CD8-positive, alpha-beta T cell (primary cell): ENCODE measurements at regions of chr6 and their contacts with region 1.

Region 1: GRCh38 chr6:89386917-89387491 is 25.1 kb downstream of the RRAGD start:
- DNase-seq: no peak
- ATAC-seq: no peak
- H3K4me3 ChIP-seq: no peak overlapping the region
- H3K4me3 Mint-ChIP-seq: no peak overlapping the region
- H3K27ac ChIP-seq: no peak overlapping the region
- H3K27ac Mint-ChIP-seq: no peak overlapping the region
- H3K4me1 ChIP-seq: no peaks in the 10 kb centered on the region
- H3K4me1 Mint-ChIP-seq: no peaks in the 10 kb centered on the region
- H3K27me3 ChIP-seq: peaks cover 0 to 3% of the 10 kb centered on the region in 2 experiments
- H3K27me3 Mint-ChIP-seq: no peaks in the 10 kb centered on the region
- CTCF ChIP-seq: no peak

Region 2: GRCh38 chr6:89161326-89162046 is 225.5 kb before region 1 on chr6:
- CTCF ChIA-PET with region 1: no interaction called
- POLR2A ChIA-PET with region 1: no interaction called
- intact Hi-C with region 1: no loop called
- DNase-seq: no peak
- ATAC-seq: no peak
- H3K4me3 ChIP-seq: no peak overlapping the region
- H3K4me3 Mint-ChIP-seq: no peak overlapping the region
- H3K27ac ChIP-seq: no peak overlapping the region
- H3K27ac Mint-ChIP-seq: no peak overlapping the region
- H3K4me1 ChIP-seq: no peaks in the 10 kb centered on the region
- H3K4me1 Mint-ChIP-seq: no peaks in the 10 kb centered on the region
- H3K27me3 ChIP-seq: no peaks in the 10 kb centered on the region
- H3K27me3 Mint-ChIP-seq: no peaks in the 10 kb centered on the region
- CTCF ChIP-seq: no peak

Region 3: DNA sequence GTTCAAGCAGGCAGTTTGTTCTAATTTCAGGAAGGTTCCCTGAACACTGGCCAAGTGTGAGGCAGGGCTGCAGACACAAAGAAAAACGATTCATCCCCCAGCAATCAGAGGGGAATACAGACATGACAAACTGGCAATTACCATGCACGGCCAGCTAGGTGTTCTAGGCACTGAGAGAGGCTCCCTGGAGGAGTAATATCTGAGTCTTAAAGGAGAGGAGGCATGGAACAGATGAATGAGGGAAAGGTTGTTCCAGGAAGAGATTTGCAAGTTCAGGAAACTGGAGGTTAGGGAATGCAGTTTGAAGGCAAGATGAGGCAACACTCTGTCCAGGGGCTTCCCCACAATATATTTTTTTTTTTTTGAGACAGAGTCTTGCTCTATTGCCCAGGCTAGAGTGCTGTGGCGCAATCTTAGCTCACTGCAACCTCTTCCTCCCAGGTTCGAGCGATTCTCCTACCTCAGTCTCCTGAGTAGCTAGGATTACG is 14.0 kb after region 1 on chr6:
- CTCF ChIA-PET with region 1: no interaction called
- POLR2A ChIA-PET with region 1: no interaction called
- intact Hi-C with region 1: loop called in 1 of 2 experiments (anchors 1 kb)
- DNase-seq: no peak
- ATAC-seq: no peak
- H3K4me3 ChIP-seq: no peak overlapping the region
- H3K4me3 Mint-ChIP-seq: no peak overlapping the region
- H3K27ac ChIP-seq: no peak overlapping the region
- H3K27ac Mint-ChIP-seq: no peak overlapping the region
- H3K4me1 ChIP-seq: no peaks in the 10 kb centered on the region
- H3K4me1 Mint-ChIP-seq: no peaks in the 10 kb centered on the region
- H3K27me3 ChIP-seq: no peaks in the 10 kb centered on the region
- H3K27me3 Mint-ChIP-seq: peaks cover 4% of the 10 kb centered on the region
- CTCF ChIP-seq: no peak